Dendritic cell treated with granulocyte-macrophage colony-stimulating factor and Interleukin-4, amounts not matched to agents 40 ng/mL and 50 ng/mL, for 4 days (primary cell): ENCODE measurements at regions of chr2 and their contacts with region 1.

Region 1: DNA sequence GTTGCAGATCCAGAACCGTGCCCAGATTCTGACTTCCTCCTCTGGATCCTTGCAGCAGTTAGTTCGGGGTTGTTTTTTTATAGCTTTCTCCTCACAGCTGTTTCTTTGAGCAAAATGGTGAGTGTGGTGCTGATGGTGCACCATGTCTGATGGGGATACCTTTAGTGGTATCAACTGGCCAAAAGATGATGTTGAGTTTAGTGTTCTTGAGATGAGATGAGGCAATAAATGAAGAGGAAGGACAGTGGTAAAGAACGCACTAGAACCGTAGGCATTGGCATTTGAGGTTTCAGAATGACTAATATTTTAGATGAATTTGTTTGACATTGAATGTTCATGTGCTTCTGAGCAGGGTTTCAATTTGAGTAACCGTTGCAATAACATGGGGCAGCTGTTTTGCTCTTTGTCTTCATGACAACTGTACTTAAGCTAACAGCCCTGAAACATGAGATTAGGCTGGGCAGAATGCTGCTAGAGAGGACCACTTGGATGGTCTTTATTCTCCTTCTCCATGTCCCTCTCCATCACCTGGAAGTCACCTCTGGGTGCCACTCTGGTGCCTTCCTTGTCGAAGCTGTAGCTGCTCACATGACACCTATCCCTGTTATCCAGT is 3.9 kb downstream of the CTLA4 start:
- H3K4me3 Mint-ChIP-seq: peak overlapping the region; percentile 1
- H3K27ac Mint-ChIP-seq: peak overlapping the region; percentile 87
- H3K4me1 Mint-ChIP-seq: peaks cover 70% of the 10 kb centered on the region
- H3K27me3 Mint-ChIP-seq: peaks cover 5% of the 10 kb centered on the region

Region 2: DNA sequence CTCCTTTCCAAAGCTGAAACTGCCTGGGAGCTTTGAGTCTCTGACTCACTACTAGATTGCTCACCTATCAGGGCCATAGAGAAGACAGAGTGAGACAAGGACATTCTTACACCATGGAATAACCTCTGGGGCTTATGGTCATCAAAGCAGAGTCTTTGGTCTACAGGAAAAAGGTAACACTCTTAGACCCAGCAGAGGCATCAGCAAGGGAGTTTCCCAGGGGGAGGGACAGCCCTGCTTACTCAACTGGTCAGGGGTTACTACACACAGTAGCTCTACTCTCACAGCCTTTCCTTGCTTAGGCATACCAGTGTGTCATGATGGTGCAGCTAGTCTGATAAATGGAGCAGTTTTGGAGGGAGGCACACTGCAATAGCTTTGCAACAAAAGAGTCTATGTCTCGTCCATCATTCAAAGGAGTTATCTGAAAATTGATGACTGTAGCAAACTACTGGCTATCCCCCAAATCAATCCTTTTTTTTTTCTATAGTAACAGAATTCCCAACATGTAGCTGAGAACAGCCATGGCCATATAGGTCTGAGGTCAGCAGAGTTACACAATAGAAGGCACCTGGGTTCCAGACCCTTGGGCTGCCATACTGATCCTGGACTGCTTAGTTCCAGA is 187.4 kb before region 1 on chr2:
- intact Hi-C with region 1: no loop called
- H3K4me3 Mint-ChIP-seq: no peak overlapping the region
- H3K27ac Mint-ChIP-seq: no peak overlapping the region
- H3K4me1 Mint-ChIP-seq: peaks cover 48% of the 10 kb centered on the region
- H3K27me3 Mint-ChIP-seq: no peaks in the 10 kb centered on the region

Region 3: GRCh38 chr2:203909261-203909967 is 37.9 kb after region 1 on chr2:
- intact Hi-C with region 1: loop called (anchors 2 kb)
- H3K4me3 Mint-ChIP-seq: peak overlapping the region; percentile 68
- H3K27ac Mint-ChIP-seq: peak overlapping the region; percentile 88
- H3K4me1 Mint-ChIP-seq: peaks cover 22% of the 10 kb centered on the region
- H3K27me3 Mint-ChIP-seq: no peaks in the 10 kb centered on the region